Endothelial cell of umbilical vein (primary cell): ENCODE measurements at regions of chr2 and their contacts with region 1.

Region 1: GRCh38 chr2:55966401-55967118 is 43.0 kb upstream of the EFEMP1 start:
- DNase-seq: peak; percentile 97
- H3K4me3 ChIP-seq: no peak overlapping the region
- H3K27ac ChIP-seq: peak overlapping the region; percentile 97
- H3K4me1 ChIP-seq: peaks cover 50% of the 10 kb centered on the region
- H3K27me3 ChIP-seq: no peaks in the 10 kb centered on the region
- CTCF ChIP-seq: peak; percentile 7
- POLR2A ChIP-seq: peak; percentile 48

Region 2: DNA sequence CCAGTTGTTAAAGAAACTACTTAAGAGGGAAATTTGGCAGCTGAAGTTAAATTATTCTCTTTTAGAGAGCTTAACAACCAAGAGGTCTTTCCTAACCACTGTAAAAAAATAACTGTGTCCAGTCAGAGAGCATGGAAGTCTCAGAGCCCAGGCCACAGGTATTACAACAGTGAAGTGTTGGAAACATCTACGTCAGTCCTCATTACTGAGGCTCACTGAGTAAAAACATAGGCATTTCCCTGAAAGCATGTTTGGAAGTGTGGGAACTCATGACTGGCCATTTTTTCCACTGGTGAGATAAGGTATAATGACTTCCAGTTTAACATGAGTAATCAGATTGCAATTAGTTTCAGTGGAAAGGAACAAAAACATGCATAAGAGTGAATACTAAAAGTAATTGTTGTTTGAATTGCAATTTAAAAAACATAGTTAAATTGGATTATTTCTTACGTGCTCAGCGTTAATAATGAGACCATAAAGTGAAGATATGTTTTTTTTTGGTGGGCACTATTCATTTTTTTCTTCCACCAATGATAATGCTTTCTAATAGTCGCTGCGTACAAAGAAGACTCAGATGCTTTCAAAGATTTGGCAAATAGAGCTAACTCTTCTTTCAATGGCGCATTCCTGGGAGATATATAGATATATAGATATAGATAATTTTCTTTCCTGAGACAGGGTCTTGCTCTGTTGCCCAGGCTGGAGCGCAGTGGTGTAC is 103.7 kb before region 1 on chr2:
- CTCF ChIA-PET with region 1: no interaction called
- POLR2A ChIA-PET with region 1: interaction called, 3 read pairs
- dilution Hi-C with region 1: no loop called
- intact Hi-C with region 1: loop called (anchors 1 kb)
- DNase-seq: peak; percentile 98
- H3K4me3 ChIP-seq: no peak overlapping the region
- H3K27ac ChIP-seq: peak overlapping the region; percentile 92
- H3K4me1 ChIP-seq: peaks cover 54% of the 10 kb centered on the region
- H3K27me3 ChIP-seq: no peaks in the 10 kb centered on the region
- CTCF ChIP-seq: no peak
- POLR2A ChIP-seq: peak; percentile 80

Region 3: GRCh38 chr2:55923091-55923981 is 43.2 kb before region 1 on chr2 and contains the start of gene EFEMP1:
- CTCF ChIA-PET with region 1: interaction called, 25 read pairs
- POLR2A ChIA-PET with region 1: interaction called, 30 read pairs
- dilution Hi-C with region 1: no loop called
- intact Hi-C with region 1: loop called (anchors 1 kb)
- DNase-seq: peak; percentile 87
- H3K4me3 ChIP-seq: peak within 1 kb of the TSS; percentile 57 to 97 (median 91)
- H3K27ac ChIP-seq: peak within 1 kb of the TSS; percentile 82
- H3K4me1 ChIP-seq: peaks cover 43% of the 10 kb centered on the region
- H3K27me3 ChIP-seq: no peaks in the 10 kb centered on the region
- CTCF ChIP-seq: peak in 1 of 2 donors; percentile 4
- POLR2A ChIP-seq: peak; percentile 96
- total RNA-seq, gene EFEMP1: 2,354 and 2,981 TPM in 2 replicates

Region 4: GRCh38 chr2:55985406-55985805 is 18.8 kb after region 1 on chr2:
- CTCF ChIA-PET with region 1: interaction called, 38 read pairs
- POLR2A ChIA-PET with region 1: interaction called, 11 read pairs
- dilution Hi-C with region 1: no loop called
- intact Hi-C with region 1: loop called (anchors 1 kb)
- DNase-seq: peak; percentile 77
- H3K4me3 ChIP-seq: peak overlapping the region in 2 of 3 experiments; percentile 4 to 32
- H3K27ac ChIP-seq: peak overlapping the region; percentile 96
- H3K4me1 ChIP-seq: peaks cover 46% of the 10 kb centered on the region
- H3K27me3 ChIP-seq: no peaks in the 10 kb centered on the region
- CTCF ChIP-seq: no peak
- POLR2A ChIP-seq: no peak